Posterior vena cava (tissue), 2 donors: ENCODE measurements at regions of chr13 and their contacts with region 1.

Region 1: GRCh38 chr13:102380012-102380411 is 21.8 kb downstream of the FGF14 start:
- DNase-seq: no peak

Region 2: DNA sequence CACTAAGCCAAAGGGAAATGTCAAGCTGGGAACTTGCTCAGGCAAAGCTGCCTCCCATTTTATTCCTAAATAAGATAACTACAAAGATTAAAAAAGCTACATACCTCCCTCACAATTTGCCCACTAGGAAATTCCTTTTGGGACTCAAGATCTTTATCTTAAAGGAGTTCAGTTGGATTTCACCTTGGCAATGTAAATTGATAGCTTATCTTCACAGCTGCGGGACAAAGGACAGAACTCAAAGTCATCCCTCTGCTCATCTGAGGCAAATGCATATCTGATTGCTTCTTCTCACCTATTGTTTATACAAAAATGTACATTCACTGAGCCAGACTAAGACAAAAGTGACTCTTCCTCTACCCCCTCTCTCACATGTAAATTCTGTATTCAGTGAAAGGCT is 26.0 kb before region 1 on chr13:
- intact Hi-C with region 1: loop called in 1 of 2 experiments (anchors 1 kb)
- DNase-seq: no peak

Region 3: DNA sequence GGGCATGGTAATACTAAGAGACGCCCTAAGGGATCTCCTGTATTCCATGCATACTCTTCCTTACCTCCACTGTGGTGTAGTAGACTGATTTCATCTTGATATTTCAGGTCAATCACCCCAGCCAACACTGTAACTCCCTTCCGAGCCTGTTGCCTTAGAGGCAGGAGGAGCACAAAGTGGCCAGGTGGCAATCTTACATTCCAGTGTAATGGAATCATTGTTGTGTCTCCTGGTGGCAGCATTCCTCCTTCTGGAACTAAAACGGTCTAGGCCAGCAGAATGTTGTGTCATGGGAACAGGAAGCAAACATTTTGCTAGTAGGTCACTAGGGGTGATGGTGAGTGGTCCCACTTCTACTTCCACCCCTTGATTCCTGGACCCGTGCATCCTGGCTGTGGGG is 1091.9 kb after region 1 on chr13:
- intact Hi-C with region 1: no loop called
- DNase-seq: no peak